AG04449 (cell line): ENCODE measurements at regions of chr1 and their contacts with region 1.

Region 1: GRCh38 chr1:21368515-21369289 is 71.2 kb upstream of the NBPF3 start:
- DNase-seq: no peak
- H3K4me3 ChIP-seq: no peak overlapping the region
- CTCF ChIP-seq: peak; percentile 96

Region 2: DNA sequence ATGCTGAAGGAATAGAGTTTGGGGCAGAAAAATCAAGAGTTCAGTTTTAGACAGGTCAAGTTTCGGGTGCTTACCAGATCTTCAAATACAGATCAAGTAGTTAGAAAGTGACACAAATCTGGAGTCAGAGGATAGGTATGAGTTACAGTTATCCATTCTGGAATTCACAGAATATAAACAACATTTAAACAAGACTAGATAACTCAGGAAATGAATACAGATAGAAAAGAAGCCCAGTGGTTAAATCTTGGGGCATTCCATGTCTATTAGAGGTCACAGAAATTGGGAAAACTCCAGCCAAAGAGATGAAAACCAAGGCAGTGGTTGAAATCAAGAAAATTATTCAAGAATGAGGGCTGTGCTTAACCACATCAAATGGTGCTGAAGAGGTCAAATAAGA is 394.6 kb before region 1 on chr1:
- CTCF ChIA-PET with region 1: no interaction called
- POLR2A ChIA-PET with region 1: no interaction called
- DNase-seq: no peak
- H3K4me3 ChIP-seq: no peak overlapping the region
- CTCF ChIP-seq: no peak

Region 3: GRCh38 chr1:21200767-21201166 is 167.9 kb before region 1 on chr1:
- CTCF ChIA-PET with region 1: interaction called, 12 read pairs
- POLR2A ChIA-PET with region 1: interaction called, 4 read pairs
- DNase-seq: no peak
- H3K4me3 ChIP-seq: no peak overlapping the region
- CTCF ChIP-seq: no peak

Region 4: GRCh38 chr1:21238141-21238800 is 130.4 kb before region 1 on chr1:
- CTCF ChIA-PET with region 1: interaction called, 405 read pairs
- POLR2A ChIA-PET with region 1: interaction called, 4 read pairs
- DNase-seq: peak; percentile 77
- H3K4me3 ChIP-seq: no peak overlapping the region
- CTCF ChIP-seq: no peak

Region 5: GRCh38 chr1:21270086-21270689 is 98.5 kb before region 1 on chr1:
- CTCF ChIA-PET with region 1: interaction called, 14 read pairs
- POLR2A ChIA-PET with region 1: no interaction called
- DNase-seq: no peak
- H3K4me3 ChIP-seq: no peak overlapping the region
- CTCF ChIP-seq: peak; percentile 89

Region 6: GRCh38 chr1:21384620-21385019 is 15.9 kb after region 1 on chr1:
- CTCF ChIA-PET with region 1: interaction called, 19 read pairs
- POLR2A ChIA-PET with region 1: no interaction called
- DNase-seq: no peak
- H3K4me3 ChIP-seq: no peak overlapping the region
- CTCF ChIP-seq: no peak

Region 7: GRCh38 chr1:21508580-21509350 is 140.1 kb after region 1 on chr1:
- CTCF ChIA-PET with region 1: interaction called, 11 read pairs
- POLR2A ChIA-PET with region 1: no interaction called
- DNase-seq: no peak
- H3K4me3 ChIP-seq: no peak overlapping the region; the same call in 1 of the 2 replicates
- CTCF ChIP-seq: peak; percentile 76

Region 8: DNA sequence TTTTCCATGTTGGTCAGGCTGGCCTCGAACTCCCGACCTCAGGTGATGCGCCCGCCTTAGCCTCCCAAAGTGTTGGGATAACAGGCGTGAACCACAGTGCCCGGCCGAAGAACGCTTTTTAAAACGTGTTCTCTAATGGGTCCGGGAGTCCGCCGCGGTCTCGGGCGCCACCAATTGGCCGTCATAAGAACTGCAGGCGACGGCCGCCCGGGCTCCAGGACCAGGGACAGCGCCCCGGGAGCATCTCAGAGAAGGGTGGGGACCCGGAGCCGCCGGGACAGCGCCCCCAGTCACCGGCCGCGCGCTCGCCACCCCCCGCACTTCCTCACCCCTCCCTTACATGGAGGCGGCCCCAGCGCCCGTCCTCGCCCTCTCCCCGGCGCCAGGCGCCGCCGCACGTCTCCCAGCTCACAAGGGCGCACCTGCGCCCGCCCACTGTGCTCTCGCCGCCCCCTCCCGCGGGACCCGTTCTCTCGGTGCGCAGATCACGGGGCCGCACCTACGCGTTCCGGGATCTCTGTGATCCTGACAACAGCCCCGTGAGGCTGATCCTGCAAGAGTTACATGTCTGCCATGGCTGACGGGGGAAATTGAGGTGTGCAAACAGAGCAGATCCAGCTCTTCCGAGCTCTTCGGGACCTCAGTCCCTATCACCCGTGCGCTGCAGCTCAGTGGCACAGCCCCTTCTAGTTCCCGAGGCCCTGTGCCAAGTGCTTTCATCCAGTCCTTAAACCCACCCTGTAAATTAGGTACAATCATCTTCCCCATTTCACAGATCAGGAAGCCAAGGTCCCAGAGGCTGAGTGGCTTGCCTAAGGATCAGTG is 290.6 kb after region 1 on chr1:
- CTCF ChIA-PET with region 1: interaction called, 116 read pairs
- POLR2A ChIA-PET with region 1: no interaction called
- DNase-seq: no peak
- H3K4me3 ChIP-seq: no peak overlapping the region
- CTCF ChIP-seq: peak; percentile 96